ENCODE measurements at regions of chrX and their contacts with region 1.

Region 1: GRCh38 chrX:49878834-49879659 is at the start of gene USP27X:
- DNase-seq: peak; percentile 54 to 96 (median 67)

Region 2: GRCh38 chrX:49840679-49841078 is 38.4 kb before region 1 on chrX:
- intact Hi-C with region 1: loop called (anchors 5 kb)
- DNase-seq: peak; percentile 41 to 95 (median 71)

Region 3: DNA sequence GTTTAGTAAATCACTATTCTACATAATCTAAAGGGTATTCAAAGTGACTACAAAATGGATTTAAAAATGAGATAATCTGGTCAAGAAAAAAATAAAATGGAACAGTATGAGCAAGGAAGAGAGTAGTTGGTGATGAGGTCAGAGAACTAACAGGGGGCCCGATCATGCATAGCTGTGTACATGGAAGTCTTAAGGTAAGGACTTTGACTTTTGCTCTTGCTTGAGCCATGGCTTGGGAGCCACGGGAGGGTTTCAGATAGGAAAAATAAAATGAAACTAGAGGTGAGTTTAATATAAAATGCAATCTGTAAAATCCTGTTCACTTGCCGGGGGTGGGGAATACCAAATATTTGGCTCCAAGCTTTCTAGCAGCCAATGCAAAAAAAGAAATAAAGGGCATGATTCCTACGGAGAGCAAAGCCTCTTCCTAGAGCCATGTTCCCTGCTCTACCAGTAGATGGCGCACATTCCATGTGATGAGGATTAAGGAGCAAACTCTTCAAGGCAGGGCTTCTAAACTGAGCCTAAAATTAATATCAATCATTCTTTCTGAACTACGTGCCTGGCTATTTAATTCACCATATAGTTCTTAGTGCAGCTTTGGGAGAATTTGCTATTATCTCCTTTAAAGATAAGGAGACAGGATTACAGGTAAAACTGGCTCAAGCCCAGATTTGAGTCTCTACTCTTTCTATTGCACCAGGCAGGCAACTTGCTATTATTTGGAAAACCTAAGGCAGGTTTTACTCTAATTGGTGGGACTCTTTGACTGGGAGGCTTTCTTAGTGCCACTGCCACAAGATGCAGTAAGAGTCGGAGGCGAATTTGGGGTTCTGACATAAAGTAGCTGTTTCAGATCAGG is 36.5 kb after region 1 on chrX:
- intact Hi-C with region 1: no loop called
- DNase-seq: peak in 4 of 10 donors; percentile 8 to 40 (median 20)